ENCODE measurements at regions of chr2 and their contacts with region 1.

Region 1: GRCh38 chr2:206274434-206275268 is at the start of gene ZDBF2:
- DNase-seq: no peak
- ATAC-seq: peak; percentile 83
- H3K4me3 ChIP-seq: peak within 1 kb of the TSS; percentile 74
- H3K27ac ChIP-seq: peak within 1 kb of the TSS; percentile 76
- H3K4me1 ChIP-seq: no peaks in the 10 kb centered on the region
- H3K27me3 ChIP-seq: peaks cover 0 to 7% of the 10 kb centered on the region in 2 experiments; a peak in 2 of 4 replicates
- CTCF ChIP-seq: no peak
- EP300 ChIP-seq: no peak
- POLR2A ChIP-seq: peak; percentile 76
- RAD21 ChIP-seq: no peak
- polyA plus RNA-seq, gene ZDBF2: 0.60 to 0.68 TPM

Region 2: DNA sequence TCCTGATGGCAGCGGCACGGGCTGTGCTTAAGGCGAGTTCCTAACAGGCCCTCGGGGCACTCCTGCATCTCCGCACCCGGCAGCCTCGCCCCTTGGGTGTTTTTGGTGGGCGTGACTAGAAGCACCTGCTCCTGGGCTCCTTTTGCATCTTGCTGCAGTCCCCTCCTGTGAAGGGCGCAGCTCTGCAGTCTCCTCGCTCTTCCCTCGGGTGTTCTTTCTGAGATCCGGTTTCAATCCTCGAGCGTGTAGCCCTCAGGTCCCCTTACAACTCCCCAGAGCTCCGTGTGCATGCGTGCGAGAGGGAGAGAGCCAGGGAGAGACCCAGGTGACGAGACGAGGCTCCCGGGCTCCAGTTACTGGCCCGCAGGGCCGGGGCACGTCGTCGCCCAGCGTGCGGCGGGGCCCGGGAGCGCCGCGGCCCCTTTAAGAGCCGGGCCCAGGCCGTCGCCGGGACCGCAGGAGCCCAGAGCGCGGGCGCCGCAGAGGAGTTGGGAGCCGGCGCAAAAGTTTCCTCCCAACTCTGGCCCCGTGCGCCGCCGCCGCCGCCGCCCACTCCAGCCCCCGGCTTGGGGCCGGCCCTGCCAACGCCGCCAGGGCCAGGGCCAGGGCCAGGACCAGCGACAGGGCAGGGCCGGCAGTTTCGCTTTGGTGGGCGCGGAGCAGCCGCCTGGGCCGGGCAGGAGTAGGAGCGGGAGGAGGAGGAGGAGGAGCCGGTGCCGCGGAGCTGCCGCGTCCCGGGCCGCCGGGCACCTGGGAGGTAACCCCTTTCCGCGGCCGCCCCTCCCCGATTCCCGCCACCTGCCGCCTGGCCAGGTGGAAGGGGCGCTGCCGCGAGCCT is 1729.4 kb before region 1 on chr2 and contains the start of gene PARD3B:
- CTCF ChIA-PET with region 1: no interaction called
- POLR2A ChIA-PET with region 1: no interaction called
- RAD21 ChIA-PET with region 1: no interaction called
- SMC1A ChIA-PET with region 1: no interaction called
- in situ Hi-C with region 1: no loop called
- intact Hi-C with region 1: no loop called
- DNase-seq: no peak
- ATAC-seq: peak; percentile 81
- H3K4me3 ChIP-seq: no peak within 1 kb of the TSS; the same call in 1 of the 2 replicates
- H3K27ac ChIP-seq: no peak within 1 kb of the TSS
- H3K4me1 ChIP-seq: no peaks in the 10 kb centered on the region
- H3K27me3 ChIP-seq: peaks cover 2 to 6% of the 10 kb centered on the region in 2 experiments; a peak in 3 of 4 replicates
- CTCF ChIP-seq: no peak
- EP300 ChIP-seq: no peak
- POLR2A ChIP-seq: no peak
- RAD21 ChIP-seq: no peak
- polyA plus RNA-seq, gene PARD3B: 0.07 TPM in 1 of 2 experiments, not detected in the other

Region 3: DNA sequence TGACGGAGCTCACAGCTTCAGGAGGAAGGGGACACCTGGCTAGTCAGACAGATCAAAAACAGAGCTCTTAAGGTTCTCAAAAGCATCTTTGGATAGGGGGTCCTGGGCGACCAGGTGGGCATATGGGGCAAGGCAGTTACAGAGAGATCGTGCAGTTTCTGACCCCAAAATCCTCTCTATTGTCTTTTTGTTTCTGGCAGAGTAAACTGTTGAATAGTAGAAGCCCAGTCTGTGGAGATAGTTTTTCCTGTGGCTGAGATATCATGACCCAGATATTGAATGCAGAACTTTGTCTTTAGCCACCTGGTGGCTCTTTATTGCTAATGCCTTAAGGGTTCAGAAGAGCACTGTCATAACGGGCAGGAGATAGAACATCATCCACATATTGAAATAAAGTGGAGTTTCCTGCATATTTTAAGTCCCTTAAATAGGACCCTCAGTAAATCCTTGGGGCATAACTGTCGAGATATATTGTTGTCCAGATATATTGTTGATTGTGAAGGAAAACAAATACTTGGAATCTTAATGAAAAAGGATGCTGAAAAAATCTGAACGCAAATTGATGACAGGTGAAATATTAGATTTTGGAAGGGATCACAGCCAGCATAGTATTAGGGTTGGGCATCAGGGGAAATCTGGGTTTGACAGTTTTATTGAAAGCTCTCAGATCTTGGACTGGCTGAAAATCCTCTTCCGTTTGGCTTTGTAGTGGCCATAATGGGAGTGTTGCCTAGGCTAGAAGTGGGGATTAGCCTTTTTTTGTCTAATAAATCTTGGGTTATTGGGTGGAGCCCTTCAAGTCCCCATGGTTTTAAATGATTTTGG is 14.3 kb before region 1 on chr2:
- CTCF ChIA-PET with region 1: interaction called, 3 read pairs
- POLR2A ChIA-PET with region 1: interaction called, 9 read pairs
- RAD21 ChIA-PET with region 1: interaction called, 5 read pairs
- SMC1A ChIA-PET with region 1: interaction called, 10 read pairs
- in situ Hi-C with region 1: no loop called
- intact Hi-C with region 1: no loop called
- DNase-seq: no peak
- ATAC-seq: peak; percentile 95
- H3K4me3 ChIP-seq: no peak overlapping the region
- H3K27ac ChIP-seq: no peak overlapping the region
- H3K4me1 ChIP-seq: no peaks in the 10 kb centered on the region; the same call in 1 of the 2 replicates
- H3K27me3 ChIP-seq: peaks cover 2 to 18% of the 10 kb centered on the region in 2 experiments
- CTCF ChIP-seq: peak; percentile 45 to 55 (median 49)
- EP300 ChIP-seq: no peak
- POLR2A ChIP-seq: no peak
- RAD21 ChIP-seq: peak; percentile 54

Region 4: DNA sequence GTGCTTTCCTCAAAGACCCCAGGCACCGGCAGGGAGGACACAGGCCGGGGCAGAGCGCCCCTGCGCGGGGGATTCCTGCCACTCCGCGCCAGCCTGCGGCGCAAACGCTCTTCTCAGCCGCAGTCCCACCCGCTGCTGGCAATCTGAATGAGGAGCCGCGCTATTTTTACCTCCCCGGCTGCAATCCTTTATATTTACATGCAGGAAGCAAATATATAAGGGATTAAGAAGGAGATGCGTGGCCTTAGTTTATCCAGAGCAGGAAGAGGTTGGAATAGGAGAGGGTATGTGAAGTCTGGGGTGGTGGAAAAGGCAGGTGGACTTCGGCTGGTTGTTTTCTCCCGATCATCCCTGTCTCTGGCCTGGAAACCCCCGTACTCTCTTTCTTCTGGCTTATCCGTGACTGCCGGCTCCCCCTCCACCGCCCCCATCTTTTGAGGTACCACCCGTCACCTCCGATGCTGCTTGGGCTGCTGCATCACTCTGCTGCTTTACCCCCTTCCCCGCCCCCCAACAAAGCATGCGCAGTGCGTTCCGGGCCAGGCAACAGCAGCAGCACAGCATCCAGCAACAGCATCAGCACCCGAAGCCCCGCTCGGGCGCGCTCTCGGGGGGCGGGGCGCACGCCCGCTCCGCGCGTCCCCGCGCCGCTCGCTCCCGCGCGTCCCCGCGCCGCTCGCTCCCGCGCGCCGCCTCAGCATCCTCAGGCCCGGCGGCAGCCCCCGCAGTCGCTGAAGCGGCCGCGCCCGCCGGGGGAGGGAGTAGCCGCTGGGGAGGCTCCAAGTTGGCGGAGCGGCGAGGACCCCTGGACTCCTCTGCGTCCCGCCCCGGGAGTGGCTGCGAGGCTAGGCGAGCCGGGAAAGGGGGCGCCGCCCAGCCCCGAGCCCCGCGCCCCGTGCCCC is 168.4 kb after region 1 on chr2 and contains the start of gene ADAM23:
- CTCF ChIA-PET with region 1: no interaction called
- POLR2A ChIA-PET with region 1: no interaction called
- RAD21 ChIA-PET with region 1: no interaction called
- SMC1A ChIA-PET with region 1: no interaction called
- in situ Hi-C with region 1: no loop called
- intact Hi-C with region 1: loop called (anchors 10 kb)
- DNase-seq: no peak
- ATAC-seq: peak; percentile 51
- H3K4me3 ChIP-seq: peak within 1 kb of the TSS; percentile 63
- H3K27ac ChIP-seq: no peak within 1 kb of the TSS
- H3K4me1 ChIP-seq: peaks cover 7% of the 10 kb centered on the region
- H3K27me3 ChIP-seq: peaks cover 3 to 24% of the 10 kb centered on the region in 2 experiments
- CTCF ChIP-seq: peak in 1 of 3 experiments; percentile 15; a peak in 2 of 6 replicates
- EP300 ChIP-seq: no peak
- POLR2A ChIP-seq: peak; percentile 55; the same call in 1 of the 2 replicates
- RAD21 ChIP-seq: peak; percentile 38; the same call in 1 of the 2 replicates
- polyA plus RNA-seq, gene ADAM23: 7.9 to 11.9 TPM

Measured in GM12878 (cell line).